HEK293 (cell line): ENCODE measurements at regions of chr17 and their contacts with region 1.

Region 1: GRCh38 chr17:62065598-62066468 is 755 bp upstream of the MED13 start:
- H3K4me3 ChIP-seq: peak overlapping the region; percentile 97
- H3K27ac ChIP-seq: peak overlapping the region; percentile 92
- H3K4me1 ChIP-seq: peaks cover 13% of the 10 kb centered on the region
- CTCF ChIP-seq: peak; percentile 89

Region 2: GRCh38 chr17:61470530-61471315 is 595.1 kb before region 1 on chr17:
- CTCF ChIA-PET with region 1: no interaction called
- POLR2A ChIA-PET with region 1: no interaction called
- H3K4me3 ChIP-seq: no peak overlapping the region
- H3K27ac ChIP-seq: no peak overlapping the region
- H3K4me1 ChIP-seq: peaks cover 6% of the 10 kb centered on the region
- CTCF ChIP-seq: 0 out of 2 replicates have a peak, but pooled peaks have one; percentile 11

Region 3: DNA sequence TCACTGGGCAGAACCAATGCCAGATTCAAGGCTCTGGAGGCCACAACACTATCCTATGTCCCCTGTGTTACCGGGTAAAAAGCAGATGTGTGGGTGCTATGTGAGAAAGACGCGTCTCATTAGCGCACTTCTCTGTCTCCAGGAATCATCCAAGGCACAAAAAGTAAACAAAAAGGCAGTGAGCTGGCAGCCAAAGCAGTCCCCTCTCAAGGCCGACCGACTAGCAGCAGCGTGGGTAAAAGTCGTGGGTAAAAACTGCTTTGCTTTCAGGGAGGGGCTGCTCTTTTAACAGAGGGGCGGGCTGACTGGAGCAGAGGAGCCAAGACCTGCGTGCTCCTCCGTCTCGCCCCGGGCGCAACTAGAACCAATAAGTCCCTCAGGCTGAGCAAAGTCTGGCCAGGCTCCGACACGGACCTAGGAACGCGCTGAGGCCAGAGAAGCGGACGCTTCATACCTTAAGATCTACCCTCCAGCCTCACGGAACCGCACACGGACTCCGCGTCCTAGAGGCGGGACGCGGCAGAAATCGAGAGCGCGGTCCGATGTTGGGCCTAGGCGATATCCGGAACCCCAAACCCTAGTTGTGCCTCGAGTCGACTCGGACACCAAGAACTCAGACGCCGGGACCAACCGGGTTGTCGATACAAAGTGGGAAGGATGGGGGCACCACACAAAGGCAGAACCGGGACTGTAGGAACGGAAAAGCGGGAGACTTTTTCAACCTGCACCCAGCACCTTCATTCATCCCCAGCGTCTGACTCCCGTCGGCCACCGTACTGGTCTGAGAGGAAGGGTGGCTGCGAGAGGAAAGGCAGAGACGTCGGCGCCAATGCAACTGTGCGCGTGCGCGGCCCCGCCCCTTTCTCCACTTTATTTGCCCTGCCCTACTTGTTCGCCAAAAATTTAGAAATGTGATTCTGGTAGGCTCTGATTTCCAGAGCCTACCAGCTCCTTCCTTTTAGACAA is 138.3 kb before region 1 on chr17 and contains the start of gene INTS2:
- CTCF ChIA-PET with region 1: no interaction called
- POLR2A ChIA-PET with region 1: interaction called, 18 read pairs
- H3K4me3 ChIP-seq: peak within 1 kb of the TSS; percentile 93
- H3K27ac ChIP-seq: peak within 1 kb of the TSS; percentile 79
- H3K4me1 ChIP-seq: peaks cover 6% of the 10 kb centered on the region; the same call in 1 of the 2 replicates
- CTCF ChIP-seq: peak; percentile 60

Region 4: DNA sequence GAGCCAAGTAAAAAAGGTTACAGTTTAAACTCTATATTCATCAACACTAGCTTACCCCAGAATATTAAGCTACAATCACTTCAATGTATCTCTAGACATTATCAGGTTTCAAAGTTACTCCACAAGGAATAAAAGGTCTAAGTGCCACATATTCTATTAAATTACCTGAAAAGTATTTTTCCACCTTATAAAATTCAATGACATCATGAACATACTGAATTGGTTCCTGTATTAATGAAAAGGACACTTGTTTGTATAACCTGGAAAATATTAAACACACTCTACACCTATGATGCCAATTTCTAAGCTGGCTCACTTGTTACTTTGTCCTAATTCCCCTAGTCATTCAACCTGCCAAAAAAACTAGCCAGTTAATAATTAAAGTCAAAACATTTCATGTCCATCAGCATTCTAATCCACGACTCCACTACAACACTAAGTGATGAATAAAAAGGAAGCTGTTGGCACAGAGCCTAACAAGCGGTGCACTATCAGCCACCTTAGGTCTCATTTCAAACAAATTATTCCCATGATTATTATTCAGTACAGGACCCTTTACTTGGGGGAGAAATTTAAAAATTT is 13.0 kb before region 1 on chr17:
- CTCF ChIA-PET with region 1: interaction called, 12 read pairs
- POLR2A ChIA-PET with region 1: interaction called, 8 read pairs
- H3K4me3 ChIP-seq: no peak overlapping the region
- H3K27ac ChIP-seq: no peak overlapping the region
- H3K4me1 ChIP-seq: peaks cover 29% of the 10 kb centered on the region
- CTCF ChIP-seq: no peak